ENCODE measurements at regions of chr18 and their contacts with region 1.

Region 1: DNA sequence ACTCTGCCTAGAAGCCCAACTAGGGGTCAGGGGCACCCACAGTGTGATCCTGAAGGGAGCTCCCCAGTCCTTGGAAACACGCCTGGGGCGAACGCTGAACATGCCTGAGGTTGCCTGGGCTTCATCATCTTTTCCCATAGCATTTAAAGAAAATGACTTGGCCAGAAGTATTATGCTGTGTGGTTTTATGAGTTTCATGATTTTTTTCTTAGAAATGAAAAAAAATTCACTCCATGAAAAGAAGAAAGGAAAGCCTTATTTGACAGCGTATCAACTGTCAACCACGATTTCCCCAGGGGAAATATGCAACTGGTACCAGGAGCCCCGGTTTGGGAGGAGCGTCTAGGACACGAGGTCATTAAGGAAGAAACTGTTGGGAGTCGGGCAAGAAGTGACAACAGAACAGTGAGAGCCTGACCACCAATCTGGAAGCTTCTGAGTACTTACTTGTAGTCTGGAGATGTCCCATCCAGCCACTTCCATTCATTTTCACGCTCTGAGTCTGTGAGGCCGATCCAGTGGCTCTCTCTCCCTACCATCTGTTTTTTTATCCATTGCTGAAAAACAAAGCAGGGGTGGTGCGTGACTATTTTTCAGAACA is 63.5 kb upstream of the THOC1 start:
- DNase-seq: peak in 1 of 5 donors; percentile 26
- ATAC-seq: peak in 3 of 4 donors; percentile 21 to 52 (median 41)
- H3K4me3 ChIP-seq: no peak overlapping the region
- H3K27ac ChIP-seq: peak overlapping the region in 8 of 12 donors; percentile 18 to 67 (median 54)
- H3K4me1 ChIP-seq: peaks cover 0 to 35% (median 18%) of the 10 kb centered on the region in 12 donors
- H3K27me3 ChIP-seq: no peaks in the 10 kb centered on the region
- CTCF ChIP-seq: no peak
- POLR2A ChIP-seq: no peak

Region 2: DNA sequence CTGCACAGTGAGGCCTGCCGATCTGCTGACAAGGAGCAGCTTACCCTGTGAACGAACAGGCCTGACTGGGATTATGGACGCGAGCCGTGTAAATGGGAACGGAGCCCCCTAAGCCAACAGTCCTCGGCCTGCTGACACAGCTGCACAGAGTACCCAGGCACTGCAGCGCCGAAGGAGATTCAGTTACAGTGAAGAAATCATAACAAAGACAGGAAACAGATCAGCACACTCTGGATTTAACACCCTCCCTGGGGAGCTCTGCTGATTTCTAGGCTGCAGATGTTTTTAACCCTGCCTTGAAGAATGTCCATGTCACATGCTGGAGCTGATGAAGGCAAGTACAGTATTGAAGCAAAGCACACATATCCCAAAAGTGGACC is 125.8 kb after region 1 on chr18:
- intact Hi-C with region 1: loop called in 2 of 10 experiments (anchors 5 to 10 kb)
- DNase-seq: peak; percentile 54 to 79 (median 69)
- ATAC-seq: peak; percentile 82 to 90 (median 90)
- H3K4me3 ChIP-seq: peak overlapping the region in 9 of 12 donors; percentile 0 to 47 (median 17)
- H3K27ac ChIP-seq: peak overlapping the region; percentile 43 to 79 (median 68)
- H3K4me1 ChIP-seq: peaks cover 0 to 52% (median 24%) of the 10 kb centered on the region in 12 donors
- H3K27me3 ChIP-seq: no peaks in the 10 kb centered on the region
- CTCF ChIP-seq: no peak
- POLR2A ChIP-seq: no peak

Region 3: DNA sequence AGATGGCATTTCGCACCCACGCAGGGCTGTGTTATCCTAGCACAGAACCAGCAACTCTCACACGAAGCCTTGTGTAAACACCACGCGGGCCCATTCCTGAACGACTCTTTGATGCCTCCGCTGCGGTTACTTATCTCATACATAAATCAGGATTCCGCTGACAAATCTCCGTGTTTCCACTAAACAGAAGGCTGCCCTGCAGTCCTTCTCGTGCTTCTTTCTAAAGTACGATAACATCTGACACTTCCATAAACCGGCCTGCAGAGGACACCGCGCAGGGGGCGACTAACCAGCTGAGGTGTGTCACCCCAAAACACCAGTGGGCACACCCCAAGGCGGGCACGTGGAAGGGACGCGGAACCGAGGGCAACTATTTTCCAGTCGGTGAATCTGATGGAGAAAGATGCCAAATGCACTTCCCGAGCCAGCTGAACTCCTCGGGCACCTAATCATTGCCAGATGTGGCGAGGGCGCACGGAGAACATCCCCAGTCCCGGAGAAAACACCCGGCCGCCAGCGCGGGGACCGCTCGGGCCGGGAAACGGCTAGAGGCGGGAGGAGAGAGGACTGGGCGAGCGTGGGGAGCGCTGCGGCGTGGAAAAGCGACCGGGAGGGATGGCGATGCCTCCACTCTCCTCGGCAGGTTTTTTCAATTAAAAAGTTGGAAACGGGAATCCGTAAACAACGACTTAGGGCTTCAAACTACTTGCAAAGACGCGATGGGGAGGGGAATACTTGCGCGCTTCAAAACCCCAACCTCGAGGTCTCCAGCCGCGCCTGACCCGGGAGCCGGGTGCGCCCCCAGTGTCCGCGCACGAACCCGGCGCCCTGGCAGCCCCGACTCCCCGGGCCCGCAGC is 168.5 kb after region 1 on chr18:
- intact Hi-C with region 1: loop called in 1 of 10 experiments (anchors 10 kb)
- DNase-seq: peak in 1 of 5 donors; percentile 36
- ATAC-seq: peak in 3 of 4 donors; percentile 16 to 40 (median 38)
- H3K4me3 ChIP-seq: peak overlapping the region; percentile 28 to 66 (median 55)
- H3K27ac ChIP-seq: peak overlapping the region in 7 of 12 donors; percentile 43 to 62 (median 54)
- H3K4me1 ChIP-seq: peaks cover 0 to 39% (median 9%) of the 10 kb centered on the region in 12 donors
- H3K27me3 ChIP-seq: peaks cover 3 to 46% (median 25%) of the 10 kb centered on the region in 9 donors
- CTCF ChIP-seq: peak in 3 of 12 donors; percentile 5 to 26 (median 24)
- POLR2A ChIP-seq: no peak